ENCODE measurements at regions of chr12 and their contacts with region 1.

Region 1: DNA sequence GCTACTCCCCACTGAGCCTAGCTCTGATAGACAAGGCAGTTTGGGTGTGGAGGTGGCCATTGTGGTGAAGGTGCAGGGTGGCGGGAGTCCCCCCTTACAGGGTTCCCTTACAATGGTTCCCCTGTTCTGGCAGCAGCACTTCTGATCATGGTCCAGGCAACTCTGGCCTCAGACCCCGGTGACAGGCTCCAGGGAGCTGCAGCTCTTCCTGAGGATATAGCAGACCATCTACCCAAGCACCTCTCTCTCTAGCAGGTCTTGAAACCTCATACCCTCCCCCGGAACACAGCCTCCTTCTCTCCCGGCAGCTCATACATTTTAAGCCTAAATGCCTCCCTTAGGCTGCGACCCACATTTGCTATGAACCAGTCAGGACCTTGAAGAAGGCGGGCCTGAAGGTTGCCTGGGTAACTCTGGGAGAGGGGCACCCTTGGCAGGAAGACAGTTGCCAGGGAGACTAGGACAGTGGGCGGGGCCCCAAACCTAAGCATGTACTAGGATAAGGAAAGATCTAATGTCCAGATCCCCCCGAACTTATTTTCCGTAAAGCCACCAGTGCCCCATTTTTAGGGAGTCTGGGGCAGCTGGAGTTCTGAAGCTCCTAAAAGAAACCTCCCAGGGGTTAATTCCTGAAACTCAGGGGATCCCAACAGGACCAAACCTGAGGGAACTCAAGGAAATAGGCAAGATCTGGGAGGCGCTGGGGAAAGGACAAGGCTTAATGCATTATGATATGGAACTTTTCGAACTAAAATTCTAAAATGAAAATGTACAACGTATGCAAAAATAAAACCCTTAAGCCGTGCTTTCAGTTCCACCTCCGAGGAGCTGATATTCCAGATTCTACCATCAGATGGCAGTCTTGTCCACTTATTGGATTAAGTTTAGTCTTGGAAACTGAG is 4.5 kb upstream of the GDF11 start:
- DNase-seq: peak; percentile 90
- ATAC-seq: peak; percentile 73
- H3K4me3 Mint-ChIP-seq: peak overlapping the region; percentile 82
- H3K27ac Mint-ChIP-seq: peak overlapping the region; percentile 86
- H3K4me1 Mint-ChIP-seq: peaks cover 43% of the 10 kb centered on the region
- H3K27me3 Mint-ChIP-seq: peaks cover 7% of the 10 kb centered on the region

Region 2: DNA sequence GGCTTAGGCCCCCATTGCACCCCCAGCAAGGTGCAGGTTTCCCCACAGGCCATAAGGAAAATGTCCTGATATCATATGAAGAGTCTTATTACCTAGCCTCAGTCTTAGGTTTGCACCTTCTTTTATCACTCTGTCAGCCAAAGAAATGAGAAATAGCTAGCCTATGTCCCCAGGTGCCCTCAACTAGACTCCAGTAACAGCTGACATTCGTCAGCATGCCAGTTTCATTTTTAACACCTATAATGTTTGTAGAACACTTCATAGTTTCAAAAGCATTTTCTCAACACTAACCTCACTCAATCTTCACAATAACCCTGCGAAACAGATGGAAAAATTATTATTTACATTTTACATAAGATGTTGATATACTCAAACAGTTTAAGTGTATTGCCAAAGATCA is 125.7 kb before region 1 on chr12:
- CTCF ChIA-PET with region 1: no interaction called
- POLR2A ChIA-PET with region 1: no interaction called
- DNase-seq: no peak
- ATAC-seq: no peak
- H3K4me3 Mint-ChIP-seq: no peak overlapping the region
- H3K27ac Mint-ChIP-seq: no peak overlapping the region
- H3K4me1 Mint-ChIP-seq: no peaks in the 10 kb centered on the region
- H3K27me3 Mint-ChIP-seq: peaks cover 16% of the 10 kb centered on the region

Region 3: GRCh38 chr12:55687746-55688145 is 50.6 kb before region 1 on chr12:
- CTCF ChIA-PET with region 1: no interaction called
- POLR2A ChIA-PET with region 1: no interaction called
- DNase-seq: no peak
- ATAC-seq: no peak
- H3K4me3 Mint-ChIP-seq: no peak overlapping the region
- H3K27ac Mint-ChIP-seq: no peak overlapping the region
- H3K4me1 Mint-ChIP-seq: peaks cover 3% of the 10 kb centered on the region
- H3K27me3 Mint-ChIP-seq: peaks cover 6% of the 10 kb centered on the region

Region 4: DNA sequence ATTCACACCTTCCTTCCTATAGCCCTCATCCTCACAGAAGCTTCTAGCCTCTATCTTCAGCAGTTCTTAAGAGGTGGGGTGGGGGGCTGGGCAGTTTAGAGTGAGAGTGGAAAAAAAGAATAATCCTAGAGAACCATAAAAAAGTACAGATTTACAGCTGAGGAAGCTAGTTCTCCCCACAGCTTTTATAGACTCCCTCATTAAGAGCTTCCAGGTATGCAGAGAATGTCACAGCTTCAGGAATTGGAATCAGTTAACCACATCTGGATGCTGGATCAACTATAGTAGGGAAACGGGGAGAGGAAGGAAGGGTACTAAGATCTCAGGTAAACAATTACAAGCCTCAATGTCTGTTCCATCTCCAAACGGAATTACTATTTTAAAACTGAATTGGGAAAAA is 16.9 kb after region 1 on chr12:
- CTCF ChIA-PET with region 1: interaction called, 22 read pairs
- POLR2A ChIA-PET with region 1: interaction called, 4 read pairs
- DNase-seq: no peak
- ATAC-seq: no peak
- H3K4me3 Mint-ChIP-seq: no peak overlapping the region
- H3K27ac Mint-ChIP-seq: no peak overlapping the region
- H3K4me1 Mint-ChIP-seq: no peaks in the 10 kb centered on the region
- H3K27me3 Mint-ChIP-seq: no peaks in the 10 kb centered on the region

Region 5: GRCh38 chr12:55817346-55818139 is 79.2 kb after region 1 on chr12 and contains the starts of genes ORMDL2 and SARNP:
- CTCF ChIA-PET with region 1: interaction called, 56 read pairs
- POLR2A ChIA-PET with region 1: interaction called, 7 read pairs
- DNase-seq: peak; percentile 99
- ATAC-seq: peak; percentile 98
- H3K4me3 Mint-ChIP-seq: no peak within 1 kb of the TSS
- H3K27ac Mint-ChIP-seq: no peak within 1 kb of the TSS
- H3K4me1 Mint-ChIP-seq: peaks cover 46% of the 10 kb centered on the region
- H3K27me3 Mint-ChIP-seq: no peaks in the 10 kb centered on the region
- total RNA-seq, gene ORMDL2: 55.2 to 57.9 TPM
- total RNA-seq, gene SARNP: 91.1 to 94.8 TPM

Region 6: GRCh38 chr12:55862286-55862685 is 123.9 kb after region 1 on chr12:
- CTCF ChIA-PET with region 1: no interaction called
- POLR2A ChIA-PET with region 1: no interaction called
- DNase-seq: no peak
- ATAC-seq: no peak
- H3K4me3 Mint-ChIP-seq: no peak overlapping the region
- H3K27ac Mint-ChIP-seq: no peak overlapping the region
- H3K4me1 Mint-ChIP-seq: no peaks in the 10 kb centered on the region
- H3K27me3 Mint-ChIP-seq: peaks cover 3% of the 10 kb centered on the region

Region 7: DNA sequence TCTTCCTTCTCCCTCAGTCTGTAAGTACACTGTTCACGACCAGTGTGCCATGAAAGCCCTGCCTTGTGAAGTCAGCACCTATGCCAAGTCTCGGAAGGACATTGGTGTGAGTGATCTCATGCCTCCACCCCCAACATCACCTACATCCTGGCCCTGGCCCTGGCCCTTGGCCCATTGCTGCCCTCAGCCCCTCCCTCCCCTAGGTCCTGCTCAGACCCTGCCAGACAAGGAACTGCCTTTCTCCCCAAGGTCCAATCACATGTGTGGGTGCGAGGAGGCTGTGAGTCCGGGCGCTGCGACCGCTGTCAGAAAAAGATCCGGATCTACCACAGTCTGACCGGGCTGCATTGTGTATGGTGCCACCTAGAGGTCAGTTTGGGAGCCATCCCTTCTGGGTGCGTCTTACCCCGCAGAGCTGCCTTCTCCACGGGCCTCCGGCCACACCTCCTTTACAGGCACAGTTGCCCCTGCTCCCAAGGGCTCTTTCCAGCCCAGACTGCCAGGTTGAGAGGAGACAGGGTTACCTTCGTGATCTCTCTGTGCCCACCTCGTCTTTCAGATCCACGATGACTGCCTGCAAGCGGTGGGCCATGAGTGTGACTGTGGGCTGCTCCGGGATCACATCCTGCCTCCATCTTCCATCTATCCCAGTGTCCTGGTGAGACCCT is 201.8 kb after region 1 on chr12:
- CTCF ChIA-PET with region 1: interaction called, 42 read pairs
- POLR2A ChIA-PET with region 1: interaction called, 6 read pairs
- DNase-seq: peak; percentile 90
- ATAC-seq: peak; percentile 93
- H3K4me3 Mint-ChIP-seq: no peak overlapping the region
- H3K27ac Mint-ChIP-seq: peak overlapping the region; percentile 69
- H3K4me1 Mint-ChIP-seq: peaks cover 67% of the 10 kb centered on the region
- H3K27me3 Mint-ChIP-seq: no peaks in the 10 kb centered on the region

Region 8: DNA sequence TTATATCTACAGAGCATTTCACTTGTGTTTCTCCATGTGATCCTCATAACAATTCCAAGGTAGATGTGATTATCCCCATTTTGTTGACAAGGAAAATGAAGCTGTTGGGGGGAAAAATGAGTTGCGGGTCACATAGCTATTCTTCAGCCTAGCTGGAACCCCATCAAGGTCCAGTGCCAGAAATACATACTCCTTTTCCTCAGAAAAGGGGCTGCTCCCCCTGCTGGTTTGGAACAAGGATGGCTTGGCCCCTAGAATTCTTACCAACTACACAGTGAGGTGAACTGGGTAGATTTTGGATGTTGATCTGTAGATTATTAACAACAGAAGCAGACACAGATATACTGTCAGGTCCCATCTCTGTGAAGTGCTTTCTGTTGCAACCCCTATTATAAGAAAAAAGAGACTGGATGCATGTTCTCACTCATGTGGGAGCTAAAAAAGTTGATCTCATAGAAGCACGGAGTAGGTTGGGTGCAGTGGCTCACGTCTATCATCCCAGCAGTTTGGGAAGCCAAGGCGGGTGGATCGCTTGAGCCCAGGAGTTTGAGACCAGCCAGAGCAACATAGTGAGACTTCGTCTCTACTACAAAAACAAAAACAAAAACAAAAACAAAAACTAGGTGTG is 291.4 kb after region 1 on chr12:
- CTCF ChIA-PET with region 1: interaction called, 16 read pairs
- POLR2A ChIA-PET with region 1: no interaction called
- DNase-seq: peak; percentile 64
- ATAC-seq: peak; percentile 64
- H3K4me3 Mint-ChIP-seq: no peak overlapping the region
- H3K27ac Mint-ChIP-seq: peak overlapping the region; percentile 8
- H3K4me1 Mint-ChIP-seq: peaks cover 54% of the 10 kb centered on the region
- H3K27me3 Mint-ChIP-seq: no peaks in the 10 kb centered on the region

Region 9: GRCh38 chr12:56127888-56128669 is 389.7 kb after region 1 on chr12 and contains the start of gene ESYT1:
- CTCF ChIA-PET with region 1: interaction called, 14 read pairs
- POLR2A ChIA-PET with region 1: no interaction called
- DNase-seq: peak; percentile 100
- ATAC-seq: peak; percentile 91
- H3K4me3 Mint-ChIP-seq: peak within 1 kb of the TSS; percentile 88
- H3K27ac Mint-ChIP-seq: peak within 1 kb of the TSS; percentile 91
- H3K4me1 Mint-ChIP-seq: peaks cover 70% of the 10 kb centered on the region
- H3K27me3 Mint-ChIP-seq: no peaks in the 10 kb centered on the region
- total RNA-seq, gene ESYT1: 317 to 333 TPM

Measured in activated CD8-positive, alpha-beta T cell treated with anti-CD3 and anti-CD28 coated beads, Interleukin-2, amount 10 ng/mL, durations not matched to agents 7 days and 5 days (primary cell).